ENCODE measurements at regions of chr2 and their contacts with region 1.

Region 1: DNA sequence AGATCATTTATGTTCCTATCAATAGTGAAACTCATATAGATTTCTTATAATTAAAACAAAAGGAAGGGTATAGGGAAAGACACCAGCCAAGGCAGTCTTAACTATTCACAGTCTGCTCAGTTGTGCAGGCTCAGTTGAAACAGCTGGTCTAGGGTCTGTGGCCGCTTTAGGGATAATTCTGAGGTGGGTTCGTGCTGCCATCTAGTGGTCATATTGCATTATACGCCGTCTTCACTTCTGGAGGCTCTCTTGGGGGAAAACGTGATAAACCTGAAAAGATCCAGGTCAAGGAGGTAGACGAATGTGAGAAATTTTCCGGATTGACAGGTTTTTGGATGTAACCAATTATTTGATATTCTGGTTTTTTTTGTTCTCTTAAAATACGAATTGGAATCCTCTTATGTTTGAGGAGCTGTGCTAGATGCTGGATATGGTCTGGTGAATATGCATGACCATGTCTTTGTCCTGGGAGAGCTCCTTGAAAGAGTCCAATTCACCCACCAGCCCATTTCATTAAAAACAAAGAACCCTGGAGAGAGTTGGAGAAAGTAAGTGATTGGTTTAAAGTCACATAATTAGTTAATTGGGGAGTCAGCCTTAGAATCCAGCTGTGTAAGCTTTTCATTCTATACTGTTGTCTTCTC is 492.4 kb downstream of the PLCL1 start:
- DNase-seq: peak; percentile 84
- H3K4me3 Mint-ChIP-seq: no peak overlapping the region
- H3K27ac Mint-ChIP-seq: no peak overlapping the region
- H3K4me1 Mint-ChIP-seq: no peaks in the 10 kb centered on the region
- H3K27me3 Mint-ChIP-seq: peaks cover 2% of the 10 kb centered on the region

Region 2: DNA sequence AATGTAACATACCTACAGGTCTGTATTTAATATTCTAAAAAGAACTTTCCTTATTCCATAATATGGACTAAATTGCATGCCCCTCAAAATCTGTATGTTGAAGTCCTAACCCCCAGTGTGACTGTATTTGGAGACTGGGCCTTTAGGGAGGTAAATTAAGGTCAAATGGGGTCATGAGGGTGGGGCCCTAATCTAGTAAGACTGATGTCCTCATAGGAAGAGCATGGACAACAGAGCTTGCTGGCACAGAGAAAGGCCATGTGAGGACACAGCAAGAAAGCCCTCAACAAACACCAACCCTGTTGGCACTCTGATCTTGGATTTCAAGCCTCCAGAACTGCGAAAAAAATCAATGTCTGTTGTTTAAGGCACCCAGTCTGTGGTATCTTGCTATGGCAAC is 880.5 kb before region 1 on chr2:
- intact Hi-C with region 1: loop called (anchors 10 kb)
- DNase-seq: peak; percentile 43
- H3K4me3 Mint-ChIP-seq: no peak overlapping the region
- H3K27ac Mint-ChIP-seq: no peak overlapping the region
- H3K4me1 Mint-ChIP-seq: peaks cover 11% of the 10 kb centered on the region
- H3K27me3 Mint-ChIP-seq: no peaks in the 10 kb centered on the region

Region 3: GRCh38 chr2:198452327-198452726 is 155.5 kb after region 1 on chr2:
- intact Hi-C with region 1: no loop called
- DNase-seq: no peak
- H3K4me3 Mint-ChIP-seq: no peak overlapping the region
- H3K27ac Mint-ChIP-seq: no peak overlapping the region
- H3K4me1 Mint-ChIP-seq: no peaks in the 10 kb centered on the region
- H3K27me3 Mint-ChIP-seq: no peaks in the 10 kb centered on the region